ENCODE measurements at regions of chr19 and their contacts with region 1.

Region 1: DNA sequence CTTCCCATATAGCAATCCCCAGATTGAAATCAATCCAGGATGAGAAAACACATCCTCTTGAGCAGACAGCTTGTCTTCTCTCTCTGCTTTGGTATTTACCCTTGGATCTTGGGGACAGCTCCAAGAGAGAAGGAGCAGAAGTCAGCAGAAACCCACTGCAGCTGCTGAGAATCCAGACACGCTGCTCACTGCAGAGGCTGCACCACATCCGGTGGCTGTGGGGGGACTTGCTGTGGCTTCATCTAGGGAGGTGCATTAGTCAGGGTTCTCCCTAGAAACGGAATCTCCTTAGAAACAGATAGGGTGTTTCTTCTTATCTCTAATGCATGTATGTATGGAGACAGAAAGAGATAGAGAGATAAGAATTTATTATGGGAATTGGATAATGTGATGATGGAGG is 2.7 kb downstream of the CYP4F12 start:
- DNase-seq: no peak
- CTCF ChIP-seq: no peak

Region 2: GRCh38 chr19:15779756-15780476 is 104.4 kb after region 1 on chr19:
- in situ Hi-C with region 1: loop called (anchors 5 kb)
- DNase-seq: no peak
- CTCF ChIP-seq: no peak